ENCODE measurements at regions of chr5 and their contacts with region 1.

Region 1: DNA sequence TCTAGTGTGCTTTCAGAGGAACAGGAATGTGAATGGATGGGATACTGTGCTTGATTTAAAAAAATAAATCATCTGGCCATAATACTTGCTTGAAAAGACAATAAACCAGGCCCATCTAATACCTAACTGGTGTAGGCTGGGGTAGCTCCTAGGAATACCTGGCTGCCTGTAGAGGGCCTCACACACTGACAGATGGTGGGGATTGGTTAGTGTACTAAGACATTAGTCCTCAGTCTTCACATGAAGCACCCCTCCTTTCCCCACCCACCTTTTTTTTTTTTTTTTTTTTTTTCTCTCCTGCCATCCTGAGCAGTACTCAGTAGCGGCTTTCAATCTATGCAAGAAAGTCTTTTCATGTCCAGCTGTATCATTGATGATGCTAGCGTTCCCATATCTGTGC is 130.5 kb downstream of the ADGRV1 start:
- DNase-seq: no peak
- ATAC-seq: no peak
- H3K4me3 ChIP-seq: no peak overlapping the region
- H3K27ac ChIP-seq: no peak overlapping the region
- H3K4me1 ChIP-seq: no peaks in the 10 kb centered on the region
- H3K27me3 ChIP-seq: no peaks in the 10 kb centered on the region; the same call in 1 of the 2 replicates
- CTCF ChIP-seq: no peak

Region 2: GRCh38 chr5:90347462-90347861 is 341.6 kb before region 1 on chr5:
- CTCF ChIA-PET with region 1: no interaction called
- POLR2A ChIA-PET with region 1: interaction called, 12 read pairs
- in situ Hi-C with region 1: no loop called
- intact Hi-C with region 1: no loop called
- DNase-seq: no peak
- ATAC-seq: no peak
- H3K4me3 ChIP-seq: no peak overlapping the region
- H3K27ac ChIP-seq: no peak overlapping the region
- H3K4me1 ChIP-seq: no peaks in the 10 kb centered on the region
- H3K27me3 ChIP-seq: peaks cover 6% of the 10 kb centered on the region
- CTCF ChIP-seq: no peak

Region 3: GRCh38 chr5:92337772-92338234 is 1648.7 kb after region 1 on chr5:
- CTCF ChIA-PET with region 1: no interaction called
- POLR2A ChIA-PET with region 1: no interaction called
- in situ Hi-C with region 1: no loop called
- intact Hi-C with region 1: no loop called
- DNase-seq: no peak
- ATAC-seq: no peak
- H3K4me3 ChIP-seq: no peak overlapping the region
- H3K27ac ChIP-seq: no peak overlapping the region; the same call in 1 of the 2 replicates
- H3K4me1 ChIP-seq: no peaks in the 10 kb centered on the region; the same call in 1 of the 2 replicates
- H3K27me3 ChIP-seq: no peaks in the 10 kb centered on the region
- CTCF ChIP-seq: no peak

Measured in Panc1 (cell line).